ENCODE measurements at regions of chr9 and their contacts with region 1.

Region 1: GRCh38 chr9:79571309-79572031 is at the start of gene TLE4:
- DNase-seq: peak; percentile 100
- ATAC-seq: peak; percentile 82 to 93 (median 85)
- H3K4me3 ChIP-seq: peak within 1 kb of the TSS; percentile 88
- H3K4me3 Mint-ChIP-seq: peak within 1 kb of the TSS; percentile 67
- H3K27ac ChIP-seq: peak within 1 kb of the TSS; percentile 91
- H3K27ac Mint-ChIP-seq: no peak within 1 kb of the TSS
- H3K4me1 ChIP-seq: peaks cover 14% of the 10 kb centered on the region
- H3K4me1 Mint-ChIP-seq: peaks cover 36 to 37% of the 10 kb centered on the region in 2 donors
- H3K27me3 ChIP-seq: peaks cover 7% of the 10 kb centered on the region
- H3K27me3 Mint-ChIP-seq: peaks cover 4 to 10% of the 10 kb centered on the region in 2 donors
- CTCF ChIP-seq: no peak
- total RNA-seq, gene TLE4: 214 to 240 (median 220) TPM

Region 2: GRCh38 chr9:79603222-79603920 is 31.9 kb after region 1 on chr9:
- intact Hi-C with region 1: no loop called
- DNase-seq: no peak
- ATAC-seq: no peak
- H3K4me3 ChIP-seq: no peak overlapping the region
- H3K4me3 Mint-ChIP-seq: no peak overlapping the region
- H3K27ac ChIP-seq: no peak overlapping the region
- H3K27ac Mint-ChIP-seq: no peak overlapping the region
- H3K4me1 ChIP-seq: peaks cover 6% of the 10 kb centered on the region
- H3K4me1 Mint-ChIP-seq: peaks cover 26 to 54% of the 10 kb centered on the region in 2 donors
- H3K27me3 ChIP-seq: no peaks in the 10 kb centered on the region
- H3K27me3 Mint-ChIP-seq: no peaks in the 10 kb centered on the region
- CTCF ChIP-seq: no peak

Region 3: DNA sequence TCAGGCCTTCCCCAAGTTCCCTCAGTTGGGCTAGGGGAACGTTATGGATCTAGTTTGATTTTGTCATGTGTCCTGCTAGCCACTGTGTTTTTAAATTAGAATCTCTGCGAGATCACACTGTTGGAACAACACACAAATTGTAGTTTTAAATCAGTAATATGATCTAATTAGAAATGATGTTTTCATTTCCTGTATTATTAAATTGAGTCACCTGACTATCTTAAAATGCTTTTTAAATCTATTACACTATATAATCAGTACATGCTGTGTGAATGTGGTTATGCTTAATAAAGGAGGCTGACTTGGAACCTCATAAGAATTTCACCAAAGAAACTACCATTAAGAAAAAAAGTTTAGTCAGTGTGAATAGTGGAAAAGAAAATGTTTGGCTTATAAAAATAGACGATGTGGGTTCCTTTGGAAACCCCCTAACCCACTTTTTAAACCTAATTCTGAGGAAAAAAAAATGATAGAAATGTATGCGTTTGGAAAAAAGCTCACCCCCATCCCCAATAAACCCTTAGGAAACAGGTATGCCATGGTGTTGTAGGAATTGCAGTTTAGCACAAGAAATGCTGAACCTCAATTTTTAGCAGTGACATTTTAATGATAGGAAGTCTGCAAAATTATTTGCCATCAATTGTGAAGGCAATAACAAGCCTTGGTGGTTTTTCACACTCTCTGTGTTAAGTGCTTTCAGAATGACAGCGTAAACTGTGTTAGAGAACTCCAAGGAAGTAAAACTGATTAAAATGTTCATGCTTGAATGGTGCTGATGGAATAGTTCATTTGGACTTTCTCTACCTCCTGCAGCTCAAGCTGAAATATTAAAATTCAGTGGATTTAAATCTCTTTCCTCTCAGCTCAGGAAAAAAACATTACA is 59.3 kb after region 1 on chr9:
- intact Hi-C with region 1: loop called (anchors 1 kb)
- DNase-seq: peak in 1 of 2 donors; percentile 37
- ATAC-seq: peak; percentile 83 to 87 (median 86)
- H3K4me3 ChIP-seq: no peak overlapping the region
- H3K4me3 Mint-ChIP-seq: peak overlapping the region; percentile 78
- H3K27ac ChIP-seq: peak overlapping the region; percentile 14
- H3K27ac Mint-ChIP-seq: peak overlapping the region; percentile 80 to 85
- H3K4me1 ChIP-seq: peaks cover 27% of the 10 kb centered on the region
- H3K4me1 Mint-ChIP-seq: peaks cover 77 to 85% of the 10 kb centered on the region in 2 donors
- H3K27me3 ChIP-seq: no peaks in the 10 kb centered on the region
- H3K27me3 Mint-ChIP-seq: no peaks in the 10 kb centered on the region
- CTCF ChIP-seq: no peak

Region 4: DNA sequence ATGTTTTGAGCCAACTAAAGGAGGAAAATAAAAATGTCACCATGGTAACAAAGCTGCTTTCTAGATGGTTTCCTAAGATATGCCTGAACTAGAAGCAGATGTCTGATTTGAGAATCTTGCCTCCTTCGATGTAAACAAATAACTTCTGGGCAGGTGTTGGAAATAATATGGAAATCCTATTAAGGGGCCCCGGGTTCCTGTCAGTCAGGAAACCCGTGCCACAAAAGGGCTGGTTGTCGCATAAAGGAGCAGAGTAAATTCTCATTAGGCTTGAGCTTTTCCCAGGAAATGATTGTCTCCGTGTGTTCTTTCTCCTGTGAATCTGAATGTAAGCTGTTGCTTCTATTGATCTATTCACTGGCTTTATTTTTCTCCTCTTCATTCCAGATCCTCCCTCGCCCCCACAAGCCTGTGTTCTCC is 91.1 kb after region 1 on chr9:
- intact Hi-C with region 1: no loop called
- DNase-seq: peak in 1 of 2 donors; percentile 32
- ATAC-seq: no peak
- H3K4me3 ChIP-seq: no peak overlapping the region
- H3K4me3 Mint-ChIP-seq: no peak overlapping the region
- H3K27ac ChIP-seq: no peak overlapping the region
- H3K27ac Mint-ChIP-seq: peak overlapping the region; percentile 31 to 49
- H3K4me1 ChIP-seq: peaks cover 6% of the 10 kb centered on the region
- H3K4me1 Mint-ChIP-seq: peaks cover 56 to 64% of the 10 kb centered on the region in 2 donors
- H3K27me3 ChIP-seq: no peaks in the 10 kb centered on the region
- H3K27me3 Mint-ChIP-seq: no peaks in the 10 kb centered on the region
- CTCF ChIP-seq: no peak

Region 5: GRCh38 chr9:79694676-79695400 is 123.4 kb after region 1 on chr9:
- intact Hi-C with region 1: loop called (anchors 1 kb)
- DNase-seq: no peak
- ATAC-seq: no peak
- H3K4me3 ChIP-seq: no peak overlapping the region
- H3K4me3 Mint-ChIP-seq: peak overlapping the region; percentile 73
- H3K27ac ChIP-seq: no peak overlapping the region
- H3K27ac Mint-ChIP-seq: peak overlapping the region; percentile 50 to 62
- H3K4me1 ChIP-seq: peaks cover 13% of the 10 kb centered on the region
- H3K4me1 Mint-ChIP-seq: peaks cover 68 to 73% of the 10 kb centered on the region in 2 donors
- H3K27me3 ChIP-seq: no peaks in the 10 kb centered on the region
- H3K27me3 Mint-ChIP-seq: no peaks in the 10 kb centered on the region
- CTCF ChIP-seq: no peak

Region 6: DNA sequence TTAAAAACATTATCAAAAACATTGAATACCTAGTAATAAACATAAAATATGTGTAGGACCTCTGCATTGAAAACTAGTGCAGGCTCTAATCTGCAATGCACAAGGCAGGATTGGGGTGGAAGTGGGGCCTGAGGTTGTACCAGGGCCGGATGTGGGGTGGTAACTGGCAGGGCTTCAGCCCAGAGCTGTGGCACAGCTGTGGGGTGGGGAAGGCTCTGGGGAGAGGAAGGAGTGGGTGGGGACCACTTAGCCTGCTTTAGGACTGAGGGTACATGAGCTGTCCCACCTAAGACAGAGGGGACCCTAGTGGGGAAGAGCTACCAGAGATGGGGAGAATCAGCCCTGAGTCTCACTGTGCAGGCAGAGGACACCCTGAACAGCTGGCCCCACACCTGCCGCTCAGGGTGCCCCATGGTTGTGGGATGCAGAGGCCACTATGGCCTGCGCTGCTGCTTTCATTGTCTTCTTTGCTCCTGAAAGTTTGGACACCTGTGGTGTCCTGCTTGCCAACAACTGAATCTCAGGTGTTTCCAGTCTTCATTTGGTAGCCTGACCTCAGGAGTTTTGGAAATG is 311.7 kb after region 1 on chr9:
- intact Hi-C with region 1: loop called (anchors 10 kb)
- DNase-seq: peak; percentile 55 to 70
- ATAC-seq: peak; percentile 90 to 99 (median 91)
- H3K4me3 ChIP-seq: no peak overlapping the region
- H3K4me3 Mint-ChIP-seq: peak overlapping the region; percentile 47
- H3K27ac ChIP-seq: no peak overlapping the region
- H3K27ac Mint-ChIP-seq: peak overlapping the region in 1 of 2 donors; percentile 81
- H3K4me1 ChIP-seq: peaks cover 26% of the 10 kb centered on the region
- H3K4me1 Mint-ChIP-seq: peaks cover 57 to 71% of the 10 kb centered on the region in 2 donors
- H3K27me3 ChIP-seq: no peaks in the 10 kb centered on the region
- H3K27me3 Mint-ChIP-seq: no peaks in the 10 kb centered on the region
- CTCF ChIP-seq: no peak

Measured in natural killer cell (primary cell).